ENCODE measurements at regions of chr2 and their contacts with region 1.

Region 1: GRCh38 chr2:175326801-175327200 is 145.3 kb upstream of the ATP5MC3 start:
- DNase-seq: no peak
- ATAC-seq: no peak
- H3K4me3 ChIP-seq: no peak overlapping the region
- H3K4me3 Mint-ChIP-seq: no peak overlapping the region
- H3K27ac ChIP-seq: no peak overlapping the region
- H3K27ac Mint-ChIP-seq: no peak overlapping the region
- H3K4me1 ChIP-seq: no peaks in the 10 kb centered on the region
- H3K4me1 Mint-ChIP-seq: no peaks in the 10 kb centered on the region
- H3K27me3 ChIP-seq: no peaks in the 10 kb centered on the region
- H3K27me3 Mint-ChIP-seq: peaks cover under 1 to 3% of the 10 kb centered on the region in 2 donors
- CTCF ChIP-seq: no peak

Region 2: GRCh38 chr2:175203621-175204496 is 122.9 kb before region 1 on chr2:
- intact Hi-C with region 1: loop called (anchors 1 kb)
- DNase-seq: peak; percentile 35 to 67
- ATAC-seq: peak; percentile 78 to 84 (median 82)
- H3K4me3 ChIP-seq: no peak overlapping the region
- H3K4me3 Mint-ChIP-seq: no peak overlapping the region
- H3K27ac ChIP-seq: no peak overlapping the region
- H3K27ac Mint-ChIP-seq: no peak overlapping the region
- H3K4me1 ChIP-seq: peaks cover 11% of the 10 kb centered on the region
- H3K4me1 Mint-ChIP-seq: peaks cover 25 to 26% of the 10 kb centered on the region in 2 donors
- H3K27me3 ChIP-seq: peaks cover 8% of the 10 kb centered on the region
- H3K27me3 Mint-ChIP-seq: peaks cover 15 to 18% of the 10 kb centered on the region in 2 donors
- CTCF ChIP-seq: peak; percentile 63